ENCODE measurements at regions of chr9 and their contacts with region 1.

Region 1: DNA sequence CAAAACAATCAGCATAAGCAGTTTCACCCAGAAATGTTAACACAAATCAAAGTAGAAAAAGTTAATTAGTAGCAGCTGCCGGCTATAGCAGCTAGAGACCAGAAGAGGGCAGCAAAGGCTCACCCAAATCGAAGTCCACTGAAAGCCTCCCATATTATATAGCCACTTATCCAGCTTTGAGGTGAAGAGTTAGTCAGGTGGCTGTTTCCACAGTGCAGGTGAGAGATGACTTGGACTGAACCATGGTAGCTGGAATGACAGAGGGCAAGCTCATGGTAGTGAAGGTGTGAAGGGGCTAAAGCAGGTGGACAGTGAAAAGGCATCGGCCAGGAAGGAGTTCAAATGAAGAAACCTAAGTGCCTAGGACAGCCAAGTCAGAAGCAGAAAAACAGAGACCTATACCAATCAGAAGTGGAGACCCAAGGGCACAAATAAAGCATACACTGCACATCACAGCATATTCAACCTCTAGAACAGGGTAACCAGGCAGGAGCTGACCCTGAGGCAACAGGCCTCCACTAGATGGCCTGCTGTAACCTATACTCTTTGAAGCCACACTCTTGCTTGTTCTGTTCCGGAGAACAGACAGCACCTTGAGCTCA is 7.2 kb upstream of the RNF38 start:
- DNase-seq: peak; percentile 27 to 86 (median 63)
- ATAC-seq: peak; percentile 96
- H3K4me3 ChIP-seq: no peak overlapping the region
- H3K4me3 Mint-ChIP-seq: no peak overlapping the region
- H3K27ac ChIP-seq: peak overlapping the region in 1 of 2 experiments; percentile 26
- H3K27ac Mint-ChIP-seq: peak overlapping the region; percentile 68
- H3K4me1 ChIP-seq: peaks cover 4% of the 10 kb centered on the region
- H3K4me1 Mint-ChIP-seq: peaks cover 17% of the 10 kb centered on the region
- H3K27me3 ChIP-seq: no peaks in the 10 kb centered on the region
- H3K27me3 Mint-ChIP-seq: no peaks in the 10 kb centered on the region
- CTCF ChIP-seq: peak; percentile 98

Region 2: GRCh38 chr9:36441966-36442365 is 34.7 kb after region 1 on chr9:
- CTCF ChIA-PET with region 1: interaction called, 22 read pairs
- POLR2A ChIA-PET with region 1: interaction called, 7 read pairs
- intact Hi-C with region 1: no loop called
- DNase-seq: peak in 2 of 9 experiments; percentile 10 to 33
- ATAC-seq: no peak
- H3K4me3 ChIP-seq: no peak overlapping the region
- H3K4me3 Mint-ChIP-seq: no peak overlapping the region
- H3K27ac ChIP-seq: no peak overlapping the region
- H3K27ac Mint-ChIP-seq: peak overlapping the region; percentile 4
- H3K4me1 ChIP-seq: peaks cover 41% of the 10 kb centered on the region
- H3K4me1 Mint-ChIP-seq: peaks cover 63% of the 10 kb centered on the region
- H3K27me3 ChIP-seq: no peaks in the 10 kb centered on the region
- H3K27me3 Mint-ChIP-seq: no peaks in the 10 kb centered on the region
- CTCF ChIP-seq: no peak

Region 3: GRCh38 chr9:36461323-36461722 is 54.1 kb after region 1 on chr9:
- CTCF ChIA-PET with region 1: interaction called, 20 read pairs
- POLR2A ChIA-PET with region 1: interaction called, 3 read pairs
- intact Hi-C with region 1: no loop called
- DNase-seq: peak in 1 of 9 experiments; percentile 30
- ATAC-seq: no peak
- H3K4me3 ChIP-seq: no peak overlapping the region
- H3K4me3 Mint-ChIP-seq: no peak overlapping the region
- H3K27ac ChIP-seq: peak overlapping the region in 1 of 2 experiments; percentile 33
- H3K27ac Mint-ChIP-seq: peak overlapping the region; percentile 73
- H3K4me1 ChIP-seq: peaks cover 19% of the 10 kb centered on the region
- H3K4me1 Mint-ChIP-seq: peaks cover 57% of the 10 kb centered on the region
- H3K27me3 ChIP-seq: no peaks in the 10 kb centered on the region
- H3K27me3 Mint-ChIP-seq: no peaks in the 10 kb centered on the region
- CTCF ChIP-seq: no peak

Region 4: GRCh38 chr9:36492865-36493264 is 85.6 kb after region 1 on chr9:
- CTCF ChIA-PET with region 1: interaction called, 11 read pairs
- POLR2A ChIA-PET with region 1: interaction called, 14 read pairs
- intact Hi-C with region 1: loop called in 1 of 2 experiments (anchors 2 kb)
- DNase-seq: peak in 3 of 9 experiments; percentile 21 to 75 (median 54)
- ATAC-seq: peak; percentile 66
- H3K4me3 ChIP-seq: peak overlapping the region; percentile 0 to 17
- H3K4me3 Mint-ChIP-seq: peak overlapping the region; percentile 74
- H3K27ac ChIP-seq: peak overlapping the region in 1 of 2 experiments; percentile 31
- H3K27ac Mint-ChIP-seq: peak overlapping the region; percentile 66
- H3K4me1 ChIP-seq: peaks cover 41% of the 10 kb centered on the region
- H3K4me1 Mint-ChIP-seq: peaks cover 64% of the 10 kb centered on the region
- H3K27me3 ChIP-seq: no peaks in the 10 kb centered on the region
- H3K27me3 Mint-ChIP-seq: no peaks in the 10 kb centered on the region
- CTCF ChIP-seq: no peak

Region 5: GRCh38 chr9:36728651-36729520 is 321.7 kb after region 1 on chr9:
- CTCF ChIA-PET with region 1: interaction called, 30 read pairs
- POLR2A ChIA-PET with region 1: no interaction called
- intact Hi-C with region 1: loop called in 1 of 2 experiments (anchors 1 kb)
- DNase-seq: peak; percentile 9 to 72 (median 61)
- ATAC-seq: peak; percentile 38
- H3K4me3 ChIP-seq: no peak overlapping the region
- H3K4me3 Mint-ChIP-seq: no peak overlapping the region
- H3K27ac ChIP-seq: no peak overlapping the region
- H3K27ac Mint-ChIP-seq: no peak overlapping the region
- H3K4me1 ChIP-seq: no peaks in the 10 kb centered on the region
- H3K4me1 Mint-ChIP-seq: no peaks in the 10 kb centered on the region
- H3K27me3 ChIP-seq: no peaks in the 10 kb centered on the region
- H3K27me3 Mint-ChIP-seq: no peaks in the 10 kb centered on the region
- CTCF ChIP-seq: peak; percentile 89

Region 6: DNA sequence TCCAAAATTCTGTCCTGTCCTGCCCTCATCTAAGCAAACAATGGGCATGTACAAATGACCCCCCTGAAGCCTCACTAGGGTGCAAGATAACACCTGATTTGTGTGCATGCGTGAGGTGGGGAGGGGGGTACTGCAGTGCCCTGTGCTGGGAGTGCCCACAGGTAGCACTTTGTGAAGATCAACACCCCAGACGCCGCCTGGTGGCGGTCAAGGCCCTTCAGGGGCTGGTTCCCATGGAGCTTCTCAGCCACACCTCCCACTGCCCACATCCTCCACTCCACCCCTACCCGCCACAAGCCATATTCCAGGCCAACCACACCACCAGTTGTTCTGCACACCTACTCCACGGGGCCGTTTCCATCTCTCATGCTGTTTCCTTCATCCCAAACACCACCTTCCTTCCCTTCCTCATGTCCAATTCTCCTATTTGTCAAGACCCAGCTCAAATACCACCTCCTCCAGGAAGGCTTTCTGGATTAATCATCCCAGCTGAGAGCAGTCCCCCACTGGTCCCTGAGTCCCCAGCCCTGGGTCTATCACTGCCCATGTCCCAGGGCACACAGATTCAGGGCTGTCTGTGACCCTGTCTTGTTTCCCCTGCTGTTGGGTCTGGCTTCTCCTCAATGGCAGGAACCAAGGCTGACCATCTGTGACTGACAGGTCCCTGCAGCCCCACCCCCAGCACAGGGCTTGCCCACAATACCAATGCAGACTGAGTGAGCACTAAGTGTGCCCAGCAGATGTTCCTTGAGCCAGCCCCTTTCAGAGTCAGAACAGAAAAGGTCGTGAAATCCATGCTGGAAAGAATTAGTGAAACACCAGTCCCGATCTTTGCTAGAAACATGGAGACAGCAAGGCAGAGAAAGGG is 448.5 kb after region 1 on chr9:
- CTCF ChIA-PET with region 1: no interaction called
- POLR2A ChIA-PET with region 1: no interaction called
- intact Hi-C with region 1: loop called in 1 of 2 experiments (anchors 5 kb)
- DNase-seq: peak in 8 of 9 experiments; percentile 9 to 66 (median 33)
- ATAC-seq: no peak
- H3K4me3 ChIP-seq: no peak overlapping the region
- H3K4me3 Mint-ChIP-seq: no peak overlapping the region
- H3K27ac ChIP-seq: no peak overlapping the region
- H3K27ac Mint-ChIP-seq: no peak overlapping the region
- H3K4me1 ChIP-seq: no peaks in the 10 kb centered on the region
- H3K4me1 Mint-ChIP-seq: peaks cover 6% of the 10 kb centered on the region
- H3K27me3 ChIP-seq: no peaks in the 10 kb centered on the region
- H3K27me3 Mint-ChIP-seq: no peaks in the 10 kb centered on the region
- CTCF ChIP-seq: no peak

Region 7: GRCh38 chr9:37004424-37004935 is 597.3 kb after region 1 on chr9:
- CTCF ChIA-PET with region 1: no interaction called
- POLR2A ChIA-PET with region 1: no interaction called
- intact Hi-C with region 1: no loop called
- DNase-seq: no peak
- ATAC-seq: no peak
- H3K4me3 ChIP-seq: no peak overlapping the region
- H3K4me3 Mint-ChIP-seq: no peak overlapping the region
- H3K27ac ChIP-seq: no peak overlapping the region
- H3K27ac Mint-ChIP-seq: no peak overlapping the region
- H3K4me1 ChIP-seq: no peaks in the 10 kb centered on the region
- H3K4me1 Mint-ChIP-seq: peaks cover 2% of the 10 kb centered on the region
- H3K27me3 ChIP-seq: peaks cover 4 to 21% of the 10 kb centered on the region in 2 experiments
- H3K27me3 Mint-ChIP-seq: peaks cover 69% of the 10 kb centered on the region
- CTCF ChIP-seq: no peak